CD4-positive, alpha-beta T cell (primary cell): ENCODE measurements at regions of chr12 and their contacts with region 1.

Region 1: GRCh38 chr12:55142669-55143565 is 16.7 kb downstream of the OR9K2 start:
- DNase-seq: peak in 12 of 14 experiments; percentile 12 to 69 (median 29)
- ATAC-seq: no peak
- H3K4me3 ChIP-seq: no peak overlapping the region
- H3K4me3 Mint-ChIP-seq: no peak overlapping the region
- H3K27ac ChIP-seq: no peak overlapping the region
- H3K27ac Mint-ChIP-seq: no peak overlapping the region
- H3K4me1 ChIP-seq: no peaks in the 10 kb centered on the region
- H3K4me1 Mint-ChIP-seq: no peaks in the 10 kb centered on the region
- H3K27me3 ChIP-seq: no peaks in the 10 kb centered on the region
- H3K27me3 Mint-ChIP-seq: peaks cover 4% of the 10 kb centered on the region
- CTCF ChIP-seq: peak; percentile 92

Region 2: GRCh38 chr12:54998958-54999510 is 143.9 kb before region 1 on chr12:
- CTCF ChIA-PET with region 1: no interaction called
- POLR2A ChIA-PET with region 1: no interaction called
- intact Hi-C with region 1: loop called in 1 of 2 experiments (anchors 5 kb)
- DNase-seq: peak in 1 of 14 experiments; percentile 24
- ATAC-seq: no peak
- H3K4me3 ChIP-seq: no peak overlapping the region
- H3K4me3 Mint-ChIP-seq: no peak overlapping the region
- H3K27ac ChIP-seq: no peak overlapping the region
- H3K27ac Mint-ChIP-seq: no peak overlapping the region
- H3K4me1 ChIP-seq: peaks cover 6% of the 10 kb centered on the region
- H3K4me1 Mint-ChIP-seq: peaks cover 24% of the 10 kb centered on the region
- H3K27me3 ChIP-seq: no peaks in the 10 kb centered on the region
- H3K27me3 Mint-ChIP-seq: no peaks in the 10 kb centered on the region
- CTCF ChIP-seq: no peak

Region 3: DNA sequence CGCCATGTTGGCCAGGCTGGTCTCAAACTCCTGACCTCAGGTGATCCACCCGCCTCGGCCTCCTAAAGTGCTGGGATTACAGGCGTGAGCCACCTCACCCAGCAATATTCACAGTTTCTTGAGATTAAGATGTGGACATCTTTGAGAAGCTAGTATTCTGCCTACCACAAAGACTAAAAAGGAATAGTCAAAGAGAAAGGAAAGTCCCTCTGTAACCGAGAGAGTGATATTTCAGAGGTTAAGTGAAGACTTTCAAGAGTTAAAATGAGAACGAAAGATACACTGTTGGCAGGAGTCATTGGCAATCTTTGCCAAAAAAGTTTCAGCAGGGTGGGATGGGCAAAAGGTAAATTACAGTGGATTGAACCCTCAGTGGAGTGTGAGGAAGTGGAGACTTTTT is 803.6 kb after region 1 on chr12:
- CTCF ChIA-PET with region 1: no interaction called
- POLR2A ChIA-PET with region 1: no interaction called
- intact Hi-C with region 1: no loop called
- DNase-seq: no peak
- ATAC-seq: no peak
- H3K4me3 ChIP-seq: no peak overlapping the region
- H3K4me3 Mint-ChIP-seq: no peak overlapping the region
- H3K27ac ChIP-seq: no peak overlapping the region
- H3K27ac Mint-ChIP-seq: peak overlapping the region; percentile 72
- H3K4me1 ChIP-seq: peaks cover 19% of the 10 kb centered on the region
- H3K4me1 Mint-ChIP-seq: peaks cover 40% of the 10 kb centered on the region
- H3K27me3 ChIP-seq: no peaks in the 10 kb centered on the region
- H3K27me3 Mint-ChIP-seq: no peaks in the 10 kb centered on the region
- CTCF ChIP-seq: no peak